ENCODE measurements at regions of chr15 and their contacts with region 1.

Region 1: DNA sequence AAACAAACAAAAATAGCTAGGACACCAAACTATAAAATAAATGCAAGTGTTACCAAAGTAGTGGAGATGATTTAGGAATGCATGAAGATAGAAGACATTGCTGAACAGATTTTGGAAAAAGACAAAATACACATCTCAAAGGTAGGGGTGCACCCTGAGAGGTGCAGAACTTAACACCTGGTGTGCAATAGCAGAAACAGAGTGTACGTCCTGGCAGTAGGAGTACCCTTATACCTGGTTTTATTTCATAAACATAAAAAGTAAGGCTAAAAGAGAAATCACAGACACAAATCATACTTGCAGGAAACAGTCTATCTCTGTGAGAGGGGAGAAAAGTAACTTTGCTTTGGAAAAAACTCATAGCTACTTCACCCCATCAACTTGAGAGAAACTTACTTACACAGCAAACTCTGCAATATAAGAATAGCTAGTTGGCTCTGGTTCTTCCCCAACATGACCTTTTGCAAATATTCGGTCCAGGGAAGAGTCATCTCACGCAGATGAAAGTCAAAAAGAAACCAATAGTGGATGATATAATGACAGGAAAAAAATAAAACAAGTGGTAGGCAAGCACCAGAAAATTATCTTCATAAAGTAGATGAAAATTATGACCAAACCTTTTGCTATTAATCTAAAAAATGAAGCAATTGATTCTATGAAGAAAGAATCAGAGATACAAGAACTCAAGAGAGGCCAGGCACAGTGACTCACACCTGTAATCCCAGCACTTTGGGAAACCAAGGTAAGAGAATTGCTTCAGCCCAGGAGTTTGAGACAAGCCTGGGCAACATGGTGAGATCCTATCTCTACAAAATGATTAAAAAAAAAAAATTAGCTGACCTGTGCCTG is 108.9 kb upstream of the BNIP2 start:
- DNase-seq: no peak
- ATAC-seq: no peak
- H3K4me3 ChIP-seq: peak overlapping the region; percentile 4
- H3K4me3 Mint-ChIP-seq: peak overlapping the region; percentile 44 to 75 (median 62)
- H3K27ac ChIP-seq: peak overlapping the region; percentile 70
- H3K27ac Mint-ChIP-seq: peak overlapping the region; percentile 38 to 96 (median 92)
- H3K4me1 ChIP-seq: peaks cover 22 to 72% of the 10 kb centered on the region in 2 donors
- H3K4me1 Mint-ChIP-seq: peaks cover 28 to 97% (median 88%) of the 10 kb centered on the region in 7 donors
- H3K27me3 ChIP-seq: no peaks in the 10 kb centered on the region
- H3K27me3 Mint-ChIP-seq: peaks cover 0 to 27% (median 0%) of the 10 kb centered on the region in 5 donors

Region 2: GRCh38 chr15:59668556-59668955 is 129.4 kb before region 1 on chr15:
- CTCF ChIA-PET with region 1: no interaction called
- POLR2A ChIA-PET with region 1: no interaction called
- intact Hi-C with region 1: no loop called
- DNase-seq: no peak
- ATAC-seq: no peak
- H3K4me3 ChIP-seq: no peak overlapping the region
- H3K4me3 Mint-ChIP-seq: no peak overlapping the region
- H3K27ac ChIP-seq: no peak overlapping the region
- H3K27ac Mint-ChIP-seq: peak overlapping the region in 1 of 9 donors; percentile 50
- H3K4me1 ChIP-seq: no peaks in the 10 kb centered on the region
- H3K4me1 Mint-ChIP-seq: peaks cover 0 to 7% (median 0%) of the 10 kb centered on the region in 7 donors
- H3K27me3 ChIP-seq: no peaks in the 10 kb centered on the region
- H3K27me3 Mint-ChIP-seq: no peaks in the 10 kb centered on the region

Region 3: GRCh38 chr15:59764775-59765174 is 33.2 kb before region 1 on chr15:
- CTCF ChIA-PET with region 1: interaction called, 4 read pairs
- POLR2A ChIA-PET with region 1: interaction called, 10 read pairs
- intact Hi-C with region 1: no loop called
- DNase-seq: no peak
- ATAC-seq: no peak
- H3K4me3 ChIP-seq: no peak overlapping the region
- H3K4me3 Mint-ChIP-seq: no peak overlapping the region
- H3K27ac ChIP-seq: no peak overlapping the region
- H3K27ac Mint-ChIP-seq: no peak overlapping the region
- H3K4me1 ChIP-seq: no peaks in the 10 kb centered on the region
- H3K4me1 Mint-ChIP-seq: peaks cover 0 to 11% (median 8%) of the 10 kb centered on the region in 7 donors
- H3K27me3 ChIP-seq: no peaks in the 10 kb centered on the region
- H3K27me3 Mint-ChIP-seq: peaks cover 0 to 19% (median 0%) of the 10 kb centered on the region in 5 donors

Region 4: GRCh38 chr15:59814409-59814808 is 16.4 kb after region 1 on chr15:
- CTCF ChIA-PET with region 1: interaction called, 3 read pairs
- POLR2A ChIA-PET with region 1: interaction called, 26 read pairs
- intact Hi-C with region 1: loop called in 1 of 2 experiments (anchors 1 kb)
- DNase-seq: peak in 7 of 9 donors; percentile 51 to 73 (median 64)
- ATAC-seq: peak; percentile 91
- H3K4me3 ChIP-seq: no peak overlapping the region
- H3K4me3 Mint-ChIP-seq: peak overlapping the region; percentile 23 to 84 (median 58)
- H3K27ac ChIP-seq: peak overlapping the region; percentile 41
- H3K27ac Mint-ChIP-seq: peak overlapping the region; percentile 2 to 94 (median 90)
- H3K4me1 ChIP-seq: peaks cover 0 to 22% of the 10 kb centered on the region in 2 donors
- H3K4me1 Mint-ChIP-seq: peaks cover 9 to 39% (median 35%) of the 10 kb centered on the region in 7 donors
- H3K27me3 ChIP-seq: no peaks in the 10 kb centered on the region
- H3K27me3 Mint-ChIP-seq: peaks cover 0 to 37% (median 0%) of the 10 kb centered on the region in 5 donors

Region 5: DNA sequence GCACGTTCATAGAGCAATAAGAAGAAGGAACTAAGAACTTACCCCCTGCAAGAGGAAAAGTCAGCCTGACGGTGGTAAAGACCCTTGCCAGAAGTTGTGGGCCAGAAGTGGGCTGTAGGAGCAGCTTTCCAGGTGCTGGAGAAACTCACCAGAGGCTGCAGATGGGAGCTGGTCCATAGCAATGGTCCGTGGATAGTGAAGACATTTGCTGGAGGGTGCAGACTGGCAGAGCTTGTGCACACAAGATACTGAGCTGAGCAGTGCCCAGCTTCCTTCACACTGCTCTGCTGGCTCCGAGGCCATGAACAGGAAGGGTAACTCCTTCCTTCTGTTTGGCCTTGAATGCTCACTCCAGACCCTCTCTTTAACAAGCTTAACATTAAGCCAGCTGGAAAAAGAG is 40.9 kb after region 1 on chr15:
- CTCF ChIA-PET with region 1: no interaction called
- POLR2A ChIA-PET with region 1: no interaction called
- intact Hi-C with region 1: loop called in 1 of 2 experiments (anchors 5 kb)
- DNase-seq: peak in 2 of 9 donors; percentile 11 to 19
- ATAC-seq: peak; percentile 24
- H3K4me3 ChIP-seq: no peak overlapping the region
- H3K4me3 Mint-ChIP-seq: peak overlapping the region; percentile 27 to 67 (median 62)
- H3K27ac ChIP-seq: no peak overlapping the region
- H3K27ac Mint-ChIP-seq: peak overlapping the region in 8 of 9 donors; percentile 33 to 84 (median 64)
- H3K4me1 ChIP-seq: peaks cover 0 to 14% of the 10 kb centered on the region in 2 donors
- H3K4me1 Mint-ChIP-seq: peaks cover 10 to 58% (median 44%) of the 10 kb centered on the region in 7 donors
- H3K27me3 ChIP-seq: no peaks in the 10 kb centered on the region
- H3K27me3 Mint-ChIP-seq: peaks cover 0 to 12% (median 0%) of the 10 kb centered on the region in 5 donors

Measured in naive thymus-derived CD4-positive, alpha-beta T cell (primary cell).